Mammary epithelial cell (primary cell): ENCODE measurements at regions of chr7 and their contacts with region 1.

Region 1: GRCh38 chr7:156147104-156147503 is 334.8 kb upstream of the SHH start:
- DNase-seq: no peak
- H3K4me3 ChIP-seq: no peak overlapping the region
- H3K27ac ChIP-seq: no peak overlapping the region
- H3K4me1 ChIP-seq: no peaks in the 10 kb centered on the region
- H3K27me3 ChIP-seq: no peaks in the 10 kb centered on the region
- CTCF ChIP-seq: no peak

Region 2: GRCh38 chr7:156220078-156220605 is 73.0 kb after region 1 on chr7:
- CTCF ChIA-PET with region 1: no interaction called
- dilution Hi-C with region 1: loop called (anchors 5 kb)
- in situ Hi-C with region 1: no loop called
- intact Hi-C with region 1: no loop called
- DNase-seq: no peak
- H3K4me3 ChIP-seq: no peak overlapping the region
- H3K27ac ChIP-seq: no peak overlapping the region
- H3K4me1 ChIP-seq: no peaks in the 10 kb centered on the region
- H3K27me3 ChIP-seq: no peaks in the 10 kb centered on the region
- CTCF ChIP-seq: no peak

Region 3: GRCh38 chr7:157111311-157111710 is 964.2 kb after region 1 on chr7:
- CTCF ChIA-PET with region 1: no interaction called
- dilution Hi-C with region 1: no loop called
- in situ Hi-C with region 1: no loop called
- intact Hi-C with region 1: no loop called
- DNase-seq: no peak
- H3K4me3 ChIP-seq: no peak overlapping the region
- H3K27ac ChIP-seq: no peak overlapping the region
- H3K4me1 ChIP-seq: no peaks in the 10 kb centered on the region
- H3K27me3 ChIP-seq: peaks cover 2% of the 10 kb centered on the region
- CTCF ChIP-seq: no peak